ENCODE measurements at regions of chr3 and their contacts with region 1.

Region 1: DNA sequence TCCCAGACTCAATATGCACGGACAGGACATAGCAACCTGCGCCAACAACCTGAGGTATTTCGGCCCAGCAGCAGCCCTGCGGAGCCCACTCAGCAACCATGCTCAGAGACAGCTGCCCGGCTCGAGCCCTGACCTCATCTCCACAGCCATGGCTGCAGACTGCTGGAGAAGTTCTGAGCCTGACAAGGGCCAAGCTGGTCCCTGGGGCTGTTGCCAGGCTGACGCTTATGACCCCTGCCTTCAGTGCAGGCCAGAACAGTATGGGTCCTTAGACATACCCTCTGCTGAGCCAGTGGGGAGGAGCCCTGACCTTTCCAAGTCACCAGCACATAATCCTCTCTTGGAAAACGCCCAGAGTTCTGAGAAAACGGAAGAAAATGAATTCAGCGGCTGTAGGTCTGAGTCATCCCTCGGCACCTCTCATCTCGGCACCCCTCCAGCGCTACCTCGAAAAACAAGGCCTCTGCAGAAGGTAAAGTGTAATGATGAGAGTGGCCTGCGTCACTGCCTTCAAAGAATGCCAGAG is 25.5 kb downstream of the TMEM41A start:
- DNase-seq: peak; percentile 93
- ATAC-seq: peak; percentile 91
- H3K4me3 ChIP-seq: peak overlapping the region in 1 of 2 experiments; percentile 33; a peak in 1 of 4 replicates
- H3K27ac ChIP-seq: peak overlapping the region; percentile 56
- H3K4me1 ChIP-seq: peaks cover 42 to 57% of the 10 kb centered on the region in 2 experiments
- H3K27me3 ChIP-seq: no peaks in the 10 kb centered on the region
- CTCF ChIP-seq: no peak
- POLR2A ChIP-seq: no peak
- RAD21 ChIP-seq: peak; percentile 28; the same call in 1 of the 2 replicates

Region 2: DNA sequence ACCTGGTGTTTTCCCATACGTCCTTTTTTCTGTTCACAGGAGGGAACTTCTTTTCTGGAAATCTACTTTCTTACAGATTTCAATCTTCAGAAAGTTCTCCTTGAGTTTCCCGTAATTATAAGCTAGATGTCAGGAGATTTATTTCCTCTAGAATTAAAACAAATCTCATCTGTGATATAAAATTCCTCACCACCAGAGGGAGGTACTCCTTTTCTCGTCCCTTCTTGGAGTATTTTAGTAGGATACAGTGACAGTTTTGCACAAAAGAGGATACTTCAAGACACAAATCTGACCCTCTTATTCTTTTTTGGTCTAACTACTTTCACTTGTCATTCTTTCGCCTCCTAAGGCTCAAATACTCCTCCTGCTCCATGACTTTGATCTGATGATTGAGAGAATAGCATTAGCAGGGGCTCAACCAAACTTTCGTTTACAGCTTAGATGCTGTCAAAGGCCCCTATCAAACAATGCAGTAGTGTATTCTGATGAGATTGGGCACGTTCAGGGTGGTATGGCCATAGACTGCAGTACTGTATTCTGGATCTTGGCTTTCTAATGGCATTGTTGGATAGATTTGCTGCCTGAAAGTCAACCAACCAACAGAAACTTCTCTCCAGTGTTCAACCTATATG is 12.5 kb before region 1 on chr3:
- CTCF ChIA-PET with region 1: interaction called, 11 read pairs
- POLR2A ChIA-PET with region 1: no interaction called
- RAD21 ChIA-PET with region 1: interaction called in 1 of 2 experiments, 3 read pairs
- intact Hi-C with region 1: no loop called
- DNase-seq: peak; percentile 32
- ATAC-seq: peak; percentile 75
- H3K4me3 ChIP-seq: no peak overlapping the region
- H3K27ac ChIP-seq: no peak overlapping the region
- H3K4me1 ChIP-seq: no peaks in the 10 kb centered on the region
- H3K27me3 ChIP-seq: no peaks in the 10 kb centered on the region
- CTCF ChIP-seq: peak; percentile 46 to 86 (median 66); a peak in 5 of 6 replicates
- POLR2A ChIP-seq: no peak
- RAD21 ChIP-seq: peak; percentile 83